Right ventricle myocardium inferior (tissue), 1 donor: ENCODE measurements at regions of chr11 and their contacts with region 1.

Region 1: DNA sequence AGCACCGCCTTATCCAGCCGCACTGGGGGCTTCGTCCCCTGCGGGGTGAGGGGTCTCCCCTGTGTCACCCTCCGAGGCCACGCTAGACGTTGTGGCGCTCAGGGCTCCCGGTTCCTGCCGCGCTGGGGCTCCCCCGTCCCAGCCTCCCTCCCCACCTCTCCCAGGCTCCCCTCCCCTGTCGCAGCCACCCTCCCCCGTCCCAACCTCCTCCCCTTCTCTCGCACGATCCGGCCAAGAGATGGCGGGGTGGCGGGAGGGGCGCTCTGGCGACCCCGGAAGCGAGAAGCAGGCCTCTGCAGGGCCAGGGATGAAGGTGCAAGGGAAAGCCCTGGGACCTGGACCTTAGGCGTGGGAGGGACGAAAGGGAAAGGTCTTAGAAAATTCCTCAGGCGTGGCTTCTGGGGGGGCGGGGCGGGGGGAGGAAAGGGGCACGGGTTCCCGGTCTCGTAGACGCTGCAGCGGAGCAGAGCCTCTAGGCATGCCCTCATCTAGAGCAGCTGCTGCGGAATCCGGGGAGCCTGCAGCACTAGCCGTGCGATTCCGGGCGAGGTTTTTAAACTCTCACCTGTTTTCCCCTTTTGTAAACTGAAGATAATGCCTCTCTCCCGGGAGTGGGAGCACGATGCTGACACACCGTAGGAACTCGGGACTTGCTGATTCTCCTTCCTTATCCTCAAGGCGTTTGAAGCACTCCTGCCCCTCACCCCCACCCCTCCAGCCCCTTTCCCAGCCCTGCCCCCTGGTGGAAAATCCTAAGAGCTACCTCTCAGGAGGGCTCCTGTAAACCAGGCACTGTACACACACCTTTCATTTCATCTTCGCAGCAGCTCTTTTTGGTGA is 14.4 kb downstream of the KCNJ5 start:
- DNase-seq: no peak
- ATAC-seq: peak; percentile 53

Region 2: GRCh38 chr11:128890543-128891368 is 14.8 kb before region 1 on chr11 and contains the start of gene KCNJ5:
- intact Hi-C with region 1: loop called (anchors 2 kb)
- DNase-seq: no peak
- ATAC-seq: peak; percentile 47
- total RNA-seq, gene KCNJ5: 7.5 TPM